Psoas muscle (tissue), 8 donors: ENCODE measurements at regions of chr7 and their contacts with region 1.

Region 1: DNA sequence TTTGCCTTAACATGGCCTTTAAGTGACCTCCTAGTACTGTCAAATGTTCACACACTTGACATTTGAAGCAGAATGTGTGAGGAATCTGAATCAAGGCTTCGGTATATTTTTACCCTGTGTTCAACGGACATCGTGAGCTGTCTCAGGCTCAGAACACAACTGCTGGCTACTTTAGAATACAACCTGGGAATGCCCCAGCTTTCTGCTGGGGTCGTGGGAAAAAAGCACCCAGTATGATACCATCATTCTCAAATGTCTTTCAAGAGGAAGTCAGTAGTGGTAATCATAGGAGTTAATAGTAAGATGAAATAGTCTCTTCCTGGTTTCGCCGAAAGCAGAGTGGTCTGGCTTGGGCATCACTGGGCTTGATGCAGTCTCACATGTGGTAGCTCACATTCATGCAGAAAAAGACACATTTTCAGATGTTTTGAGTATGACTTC is 67.2 kb downstream of the CREB5 start:
- DNase-seq: no peak
- ATAC-seq: peak in 2 of 4 donors; percentile 29 to 49
- H3K4me3 ChIP-seq: no peak overlapping the region
- H3K27ac ChIP-seq: no peak overlapping the region
- H3K4me1 ChIP-seq: peaks cover 18% of the 10 kb centered on the region
- H3K27me3 ChIP-seq: no peaks in the 10 kb centered on the region
- CTCF ChIP-seq: no peak

Region 2: DNA sequence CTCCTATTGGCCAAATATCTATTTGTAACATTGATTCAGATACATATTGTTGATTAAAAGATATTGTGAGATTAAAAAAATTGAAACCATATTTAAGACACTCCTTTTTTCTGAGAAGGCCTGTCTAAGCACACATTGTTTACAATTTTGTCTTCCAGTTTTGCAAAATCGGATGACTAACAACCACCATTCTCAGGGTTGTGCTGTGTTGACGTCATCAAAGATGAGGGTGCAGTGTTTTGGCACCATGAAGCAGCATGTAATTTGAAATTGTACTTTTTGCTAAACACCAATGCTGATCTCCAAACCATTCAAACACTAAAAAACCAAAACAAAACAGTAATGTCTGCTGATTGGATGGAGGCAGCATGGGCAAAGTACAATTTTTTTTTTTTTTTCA is 59.8 kb before region 1 on chr7:
- intact Hi-C with region 1: loop called (anchors 5 to 10 kb)
- DNase-seq: no peak
- ATAC-seq: peak in 2 of 4 donors; percentile 22 to 43
- H3K4me3 ChIP-seq: no peak overlapping the region
- H3K27ac ChIP-seq: no peak overlapping the region
- H3K4me1 ChIP-seq: peaks cover 13% of the 10 kb centered on the region
- H3K27me3 ChIP-seq: no peaks in the 10 kb centered on the region
- CTCF ChIP-seq: no peak